ENCODE measurements at regions of chr1 and their contacts with region 1.

Region 1: GRCh38 chr1:113072757-113073478 is at the start of gene LRIG2:
- DNase-seq: peak; percentile 99
- H3K4me3 ChIP-seq: peak within 1 kb of the TSS; percentile 65 to 99
- H3K27ac ChIP-seq: peak within 1 kb of the TSS; percentile 81 to 98
- H3K4me1 ChIP-seq: peaks cover 0 to 43% (median 18%) of the 10 kb centered on the region in 4 donors
- H3K27me3 ChIP-seq: no peaks in the 10 kb centered on the region
- CTCF ChIP-seq: peak; percentile 78 to 79

Region 2: GRCh38 chr1:112721966-112722524 is 350.9 kb before region 1 on chr1:
- intact Hi-C with region 1: loop called (anchors 2 kb)
- DNase-seq: peak in 1 of 2 donors; percentile 53
- H3K4me3 ChIP-seq: no peak overlapping the region
- H3K27ac ChIP-seq: no peak overlapping the region
- H3K4me1 ChIP-seq: peaks cover 0 to 20% (median 15%) of the 10 kb centered on the region in 4 donors
- H3K27me3 ChIP-seq: peaks cover 0 to 25% of the 10 kb centered on the region in 2 donors
- CTCF ChIP-seq: no peak

Region 3: GRCh38 chr1:112971006-112971405 is 101.9 kb before region 1 on chr1:
- intact Hi-C with region 1: no loop called
- DNase-seq: no peak
- H3K4me3 ChIP-seq: no peak overlapping the region
- H3K27ac ChIP-seq: no peak overlapping the region
- H3K4me1 ChIP-seq: no peaks in the 10 kb centered on the region
- H3K27me3 ChIP-seq: no peaks in the 10 kb centered on the region
- CTCF ChIP-seq: no peak

Region 4: GRCh38 chr1:114178936-114179335 is 1106.0 kb after region 1 on chr1:
- intact Hi-C with region 1: no loop called
- DNase-seq: no peak
- H3K4me3 ChIP-seq: no peak overlapping the region
- H3K27ac ChIP-seq: no peak overlapping the region
- H3K4me1 ChIP-seq: no peaks in the 10 kb centered on the region
- H3K27me3 ChIP-seq: no peaks in the 10 kb centered on the region
- CTCF ChIP-seq: no peak

Measured in tibial artery (tissue), 4 donors.